Ascending aorta (tissue), 2 donors: ENCODE measurements at regions of chr9 and their contacts with region 1.

Region 1: DNA sequence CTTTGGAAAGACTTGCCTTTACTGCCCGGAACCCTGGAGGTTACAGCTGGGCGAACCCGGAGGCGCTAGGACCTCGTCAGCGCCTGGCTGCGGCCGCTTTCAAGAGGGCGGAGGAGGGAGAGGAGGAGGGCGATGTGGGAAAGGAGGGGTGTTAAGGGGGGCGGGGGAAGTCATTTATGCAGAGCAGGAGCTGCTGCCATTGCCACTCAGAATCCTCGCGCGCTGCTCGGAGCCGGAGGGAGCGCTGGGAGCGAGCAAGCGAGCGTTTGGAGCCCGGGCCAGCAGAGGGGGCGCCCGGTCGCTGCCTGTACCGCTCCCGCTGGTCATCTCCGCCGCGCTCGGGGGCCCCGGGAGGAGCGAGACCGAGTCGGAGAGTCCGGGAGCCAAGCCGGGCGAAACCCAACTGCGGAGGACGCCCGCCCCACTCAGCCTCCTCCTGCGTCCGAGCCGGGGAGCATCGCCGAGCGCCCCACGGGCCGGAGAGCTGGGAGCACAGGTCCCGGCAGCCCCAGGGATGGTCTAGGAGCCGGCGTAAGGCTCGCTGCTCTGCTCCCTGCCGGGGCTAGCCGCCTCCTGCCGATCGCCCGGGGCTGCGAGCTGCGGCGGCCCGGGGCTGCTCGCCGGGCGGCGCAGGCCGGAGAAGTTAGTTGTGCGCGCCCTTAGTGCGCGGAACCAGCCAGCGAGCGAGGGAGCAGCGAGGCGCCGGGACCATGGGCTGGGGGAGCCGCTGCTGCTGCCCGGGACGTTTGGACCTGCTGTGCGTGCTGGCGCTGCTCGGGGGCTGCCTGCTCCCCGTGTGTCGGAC is at the start of gene PCSK5:
- DNase-seq: peak; percentile 76 to 96
- H3K4me3 ChIP-seq: peak within 1 kb of the TSS; percentile 72 to 78
- H3K27ac ChIP-seq: peak within 1 kb of the TSS; percentile 95 to 97
- H3K4me1 ChIP-seq: peaks cover 0 to 5% of the 10 kb centered on the region in 2 donors
- H3K27me3 ChIP-seq: no peaks in the 10 kb centered on the region
- CTCF ChIP-seq: peak in 2 of 3 experiments; percentile 27 to 38
- total RNA-seq, gene PCSK5: 66.3 TPM

Region 2: GRCh38 chr9:75088260-75088905 is 802.3 kb before region 1 on chr9 and contains the start of gene OSTF1:
- intact Hi-C with region 1: loop called (anchors 10 kb)
- DNase-seq: peak; percentile 82 to 97
- H3K4me3 ChIP-seq: peak within 1 kb of the TSS; percentile 97 to 99
- H3K27ac ChIP-seq: peak within 1 kb of the TSS; percentile 92 to 96
- H3K4me1 ChIP-seq: peaks cover 6 to 22% of the 10 kb centered on the region in 2 donors
- H3K27me3 ChIP-seq: no peaks in the 10 kb centered on the region
- CTCF ChIP-seq: peak in 1 of 3 experiments; percentile 6
- total RNA-seq, gene OSTF1: 25.1 TPM

Region 3: DNA sequence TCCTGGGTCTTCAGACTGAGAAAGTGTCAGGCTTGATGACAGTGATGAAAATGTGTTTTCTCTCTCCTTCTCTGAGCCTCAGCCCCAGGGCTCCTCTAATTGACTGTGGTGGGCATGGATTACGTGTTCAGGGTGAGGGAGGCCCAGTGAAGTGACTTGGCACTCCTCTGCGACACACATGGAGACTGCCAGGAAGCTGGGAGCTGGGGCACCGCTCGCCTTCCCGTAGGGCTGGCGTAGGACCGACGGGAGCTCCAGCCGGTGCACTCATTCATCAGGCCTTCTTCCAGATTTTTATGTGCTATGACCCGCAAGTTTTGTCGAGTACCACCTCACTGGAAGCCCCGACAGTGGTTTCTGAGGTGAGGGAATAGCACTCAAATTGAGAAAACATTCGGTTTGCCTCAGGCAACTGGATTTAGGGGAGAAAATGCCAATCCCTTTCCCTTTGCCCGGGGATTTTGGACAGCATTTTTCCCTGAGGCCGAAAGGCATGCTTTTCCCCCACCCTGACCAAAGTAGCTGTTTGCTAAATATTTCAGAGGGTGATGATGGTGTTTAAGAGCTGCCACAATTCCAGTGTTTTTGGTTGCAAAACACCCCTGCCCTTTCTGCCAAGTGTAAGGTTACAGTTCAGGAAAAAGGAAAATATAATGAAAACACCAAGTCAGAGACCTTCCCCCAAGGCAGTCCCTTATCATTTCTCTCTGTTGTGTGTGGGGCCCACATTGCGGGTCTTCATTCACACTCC is 83.5 kb after region 1 on chr9:
- intact Hi-C with region 1: loop called (anchors 2 kb)
- DNase-seq: peak; percentile 16 to 76
- H3K4me3 ChIP-seq: peak overlapping the region in 1 of 2 donors; percentile 43
- H3K27ac ChIP-seq: peak overlapping the region; percentile 84 to 89
- H3K4me1 ChIP-seq: peaks cover 0 to 11% of the 10 kb centered on the region in 2 donors
- H3K27me3 ChIP-seq: no peaks in the 10 kb centered on the region
- CTCF ChIP-seq: no peak

Region 4: GRCh38 chr9:76107482-76107881 is 216.8 kb after region 1 on chr9:
- intact Hi-C with region 1: loop called (anchors 5 kb)
- DNase-seq: peak; percentile 35 to 90
- H3K4me3 ChIP-seq: no peak overlapping the region
- H3K27ac ChIP-seq: peak overlapping the region; percentile 84 to 87
- H3K4me1 ChIP-seq: peaks cover 17 to 52% of the 10 kb centered on the region in 2 donors
- H3K27me3 ChIP-seq: no peaks in the 10 kb centered on the region
- CTCF ChIP-seq: no peak

Region 5: DNA sequence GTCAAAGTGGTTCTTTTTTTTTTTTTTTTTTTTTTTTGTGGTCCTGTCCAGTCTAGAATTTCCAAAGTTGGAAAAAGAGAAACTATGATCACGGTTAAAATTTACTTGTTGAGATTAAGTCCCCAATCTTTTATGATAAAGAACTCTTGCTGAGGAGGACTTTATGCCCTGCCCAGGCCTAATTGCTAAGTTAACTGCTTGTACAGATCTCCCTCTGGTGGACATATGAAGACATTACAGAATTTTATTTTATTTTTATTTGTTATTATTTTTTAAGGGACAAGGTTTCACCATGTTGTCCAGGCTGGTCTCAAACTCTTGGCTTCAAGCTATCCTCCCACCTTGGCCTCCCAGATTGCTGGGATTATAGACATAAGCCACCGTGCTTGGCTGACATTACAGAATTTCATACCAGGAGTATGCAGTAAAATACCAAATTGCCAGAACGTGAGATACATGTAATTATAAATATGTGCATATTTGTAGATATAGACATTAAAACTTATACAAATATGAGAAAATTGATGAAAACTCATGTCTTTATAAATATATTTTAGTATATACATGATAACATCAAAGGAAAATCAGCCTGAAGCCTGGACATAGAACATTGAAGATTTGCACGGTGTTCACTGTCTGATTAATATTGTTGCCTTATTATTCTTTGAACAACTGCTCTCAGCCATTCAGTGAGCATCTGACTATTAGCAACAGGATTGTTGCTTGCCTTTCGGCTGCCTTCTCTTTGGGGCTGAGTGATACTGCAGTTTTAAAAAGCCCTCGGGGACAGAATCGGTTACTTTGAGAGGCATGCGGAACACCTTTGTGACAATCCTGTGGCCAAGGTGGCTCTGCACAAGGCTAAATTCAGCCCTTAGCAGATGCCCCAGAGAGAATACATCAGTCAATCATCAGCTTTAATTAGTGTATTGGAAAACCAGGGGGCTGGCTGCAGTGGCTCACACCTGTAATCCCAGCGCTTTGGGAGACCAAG is 412.6 kb after region 1 on chr9:
- intact Hi-C with region 1: loop called (anchors 5 kb)
- DNase-seq: no peak
- H3K4me3 ChIP-seq: no peak overlapping the region
- H3K27ac ChIP-seq: no peak overlapping the region
- H3K4me1 ChIP-seq: peaks cover 0 to 1% of the 10 kb centered on the region in 2 donors
- H3K27me3 ChIP-seq: no peaks in the 10 kb centered on the region
- CTCF ChIP-seq: peak; percentile 65 to 76 (median 72)

Region 6: GRCh38 chr9:76687861-76688391 is 797.3 kb after region 1 on chr9:
- intact Hi-C with region 1: loop called (anchors 10 kb)
- DNase-seq: peak; percentile 31 to 87
- H3K4me3 ChIP-seq: no peak overlapping the region
- H3K27ac ChIP-seq: peak overlapping the region; percentile 60 to 71
- H3K4me1 ChIP-seq: peaks cover 0 to 36% of the 10 kb centered on the region in 2 donors
- H3K27me3 ChIP-seq: no peaks in the 10 kb centered on the region
- CTCF ChIP-seq: no peak